Caco-2 (cell line): ENCODE measurements at regions of chr2 and their contacts with region 1.

Region 1: GRCh38 chr2:191758518-191759507 is 80.9 kb downstream of the NABP1 start:
- DNase-seq: peak; percentile 75 to 77
- H3K4me3 ChIP-seq: no peak overlapping the region
- H3K4me3 Mint-ChIP-seq: no peak overlapping the region
- H3K27ac Mint-ChIP-seq: no peak overlapping the region
- H3K4me1 ChIP-seq: 0 out of 2 replicates have a peak, but pooled peaks cover 6% of the 10 kb centered on the region
- H3K4me1 Mint-ChIP-seq: no peaks in the 10 kb centered on the region
- H3K27me3 ChIP-seq: no peaks in the 10 kb centered on the region
- H3K27me3 Mint-ChIP-seq: no peaks in the 10 kb centered on the region
- CTCF ChIP-seq: peak; percentile 63 to 89

Region 2: GRCh38 chr2:191544461-191545062 is 214.3 kb before region 1 on chr2:
- CTCF ChIA-PET with region 1: no interaction called
- POLR2A ChIA-PET with region 1: no interaction called
- intact Hi-C with region 1: no loop called
- DNase-seq: no peak
- H3K4me3 ChIP-seq: no peak overlapping the region
- H3K4me3 Mint-ChIP-seq: no peak overlapping the region
- H3K27ac Mint-ChIP-seq: no peak overlapping the region
- H3K4me1 ChIP-seq: 0 out of 2 replicates have a peak, but pooled peaks cover 2% of the 10 kb centered on the region
- H3K4me1 Mint-ChIP-seq: peaks cover 7% of the 10 kb centered on the region
- H3K27me3 ChIP-seq: no peaks in the 10 kb centered on the region
- H3K27me3 Mint-ChIP-seq: no peaks in the 10 kb centered on the region
- CTCF ChIP-seq: no peak

Region 3: GRCh38 chr2:191713837-191714236 is 45.0 kb before region 1 on chr2:
- CTCF ChIA-PET with region 1: no interaction called
- POLR2A ChIA-PET with region 1: no interaction called
- intact Hi-C with region 1: loop called (anchors 2 kb)
- DNase-seq: peak in 1 of 2 experiments; percentile 25
- H3K4me3 ChIP-seq: no peak overlapping the region
- H3K4me3 Mint-ChIP-seq: no peak overlapping the region
- H3K27ac Mint-ChIP-seq: no peak overlapping the region
- H3K4me1 ChIP-seq: no peaks in the 10 kb centered on the region
- H3K4me1 Mint-ChIP-seq: no peaks in the 10 kb centered on the region
- H3K27me3 ChIP-seq: no peaks in the 10 kb centered on the region
- H3K27me3 Mint-ChIP-seq: no peaks in the 10 kb centered on the region
- CTCF ChIP-seq: no peak

Region 4: DNA sequence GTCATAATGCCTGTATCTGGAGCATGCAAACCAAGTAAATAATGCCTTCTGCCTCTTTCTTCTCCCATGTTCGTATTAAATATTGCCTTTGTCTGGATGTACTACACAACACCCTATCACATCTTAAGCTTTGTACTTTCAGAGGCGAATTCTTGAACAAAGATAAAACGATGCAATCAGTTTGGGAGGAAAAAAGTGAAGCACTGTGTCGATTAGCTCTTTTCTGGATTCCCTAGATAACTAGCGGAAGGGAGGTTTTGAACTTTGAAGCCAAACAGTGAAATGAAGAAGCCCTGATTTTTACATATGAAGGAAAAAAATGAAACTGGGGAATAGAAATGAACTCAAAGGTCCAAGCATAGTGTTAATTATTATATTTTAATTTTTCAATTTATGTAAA is 43.4 kb after region 1 on chr2:
- CTCF ChIA-PET with region 1: no interaction called
- POLR2A ChIA-PET with region 1: no interaction called
- intact Hi-C with region 1: loop called (anchors 2 kb)
- DNase-seq: peak in 1 of 2 experiments; percentile 20
- H3K4me3 ChIP-seq: no peak overlapping the region
- H3K4me3 Mint-ChIP-seq: peak overlapping the region; percentile 54
- H3K27ac Mint-ChIP-seq: peak overlapping the region; percentile 42
- H3K4me1 ChIP-seq: peaks cover 32% of the 10 kb centered on the region
- H3K4me1 Mint-ChIP-seq: peaks cover 23% of the 10 kb centered on the region
- H3K27me3 ChIP-seq: no peaks in the 10 kb centered on the region
- H3K27me3 Mint-ChIP-seq: no peaks in the 10 kb centered on the region
- CTCF ChIP-seq: no peak